Stomach (tissue), 19 donors: ENCODE measurements at regions of chr17 and their contacts with region 1.

Region 1: GRCh38 chr17:59004338-59005111 is 102.2 kb downstream of the TRIM37 start:
- DNase-seq: peak; percentile 67 to 86
- H3K4me3 ChIP-seq: no peak overlapping the region
- H3K27ac ChIP-seq: no peak overlapping the region
- H3K4me1 ChIP-seq: peaks cover 0 to 20% (median 1%) of the 10 kb centered on the region in 4 donors
- H3K27me3 ChIP-seq: no peaks in the 10 kb centered on the region
- CTCF ChIP-seq: peak in 6 of 7 experiments; percentile 56 to 99 (median 93)
- EP300 ChIP-seq: no peak
- POLR2A ChIP-seq: no peak

Region 2: DNA sequence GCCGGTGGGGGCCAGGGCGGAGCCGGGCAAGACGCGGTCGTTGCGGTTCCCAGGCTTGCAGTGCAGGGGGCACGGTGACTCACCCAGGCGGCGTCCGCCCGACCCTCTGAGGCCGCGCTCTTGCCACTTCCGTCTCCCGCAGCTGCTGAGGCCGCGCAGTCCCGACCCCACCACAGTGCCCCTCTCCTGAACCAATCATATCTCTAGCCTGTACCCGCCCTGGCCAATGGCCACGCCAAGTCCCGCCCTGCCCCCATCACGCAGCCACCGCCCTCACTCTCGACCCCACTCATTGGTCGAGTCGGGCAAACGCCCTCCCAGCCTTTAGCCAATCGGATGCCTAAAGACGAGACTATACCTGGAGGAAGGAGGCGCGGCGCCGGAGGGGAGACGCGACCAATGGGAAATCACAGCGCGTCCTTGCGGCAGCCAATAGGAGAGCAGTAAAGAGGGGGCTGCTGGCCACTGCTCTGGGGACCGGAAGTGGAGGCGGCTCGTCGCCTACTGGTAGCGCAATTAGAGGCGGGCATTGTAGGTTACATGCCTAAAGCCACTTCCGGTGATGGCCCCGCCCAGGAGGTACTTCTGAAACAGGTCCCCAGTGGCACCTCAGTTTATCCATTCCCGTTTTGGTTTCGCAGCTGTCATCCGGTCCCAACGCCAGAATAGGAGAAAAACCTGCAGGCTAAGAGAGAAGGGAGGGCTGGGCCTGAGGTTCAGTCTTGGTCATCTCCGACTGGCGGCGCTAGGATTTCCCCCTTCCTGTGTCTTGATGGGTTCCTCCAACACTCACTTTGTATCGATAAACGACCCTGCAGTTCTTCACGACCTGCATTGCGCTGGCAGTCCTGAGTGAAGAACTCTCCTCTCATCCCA is 486.6 kb before region 1 on chr17:
- intact Hi-C with region 1: loop called (anchors 10 kb)
- DNase-seq: peak; percentile 99 to 100
- H3K4me3 ChIP-seq: peak overlapping the region; percentile 63 to 76 (median 68)
- H3K27ac ChIP-seq: peak overlapping the region; percentile 93 to 98 (median 95)
- H3K4me1 ChIP-seq: peaks cover 35 to 61% (median 51%) of the 10 kb centered on the region in 4 donors
- H3K27me3 ChIP-seq: no peaks in the 10 kb centered on the region
- CTCF ChIP-seq: no peak
- EP300 ChIP-seq: no peak
- POLR2A ChIP-seq: peak in 1 of 4 donors; percentile 25

Region 3: DNA sequence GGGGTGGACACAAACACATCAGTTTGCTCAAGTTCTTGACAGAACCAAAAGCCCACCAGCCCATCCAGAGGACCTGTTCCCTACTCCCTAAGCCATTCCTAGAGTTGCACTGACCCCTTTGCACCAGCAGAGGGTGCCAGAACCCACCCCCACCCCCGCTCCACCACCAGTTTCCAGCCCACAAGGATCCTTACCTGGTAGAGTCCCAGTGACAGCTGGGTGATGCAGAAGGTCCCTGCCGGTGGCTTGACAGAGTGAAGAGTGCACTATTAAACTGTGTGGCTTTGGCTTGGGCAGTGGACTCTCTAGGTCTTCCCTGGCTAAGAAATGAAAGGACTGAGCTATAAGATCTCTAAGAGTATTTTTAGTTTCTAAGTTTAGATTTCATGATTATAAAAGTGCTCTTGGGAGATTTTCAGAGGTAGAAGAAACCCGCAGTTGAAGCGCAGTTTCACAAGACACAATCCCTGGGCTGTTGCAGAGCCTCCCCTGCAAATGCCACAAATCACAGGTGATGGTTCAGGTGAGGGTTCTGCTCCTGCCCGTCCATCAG is 416.7 kb before region 1 on chr17:
- intact Hi-C with region 1: loop called (anchors 10 kb)
- DNase-seq: peak; percentile 62 to 82
- H3K4me3 ChIP-seq: no peak overlapping the region
- H3K27ac ChIP-seq: no peak overlapping the region
- H3K4me1 ChIP-seq: no peaks in the 10 kb centered on the region
- H3K27me3 ChIP-seq: no peaks in the 10 kb centered on the region
- CTCF ChIP-seq: peak in 5 of 7 experiments; percentile 65 to 95 (median 84)
- EP300 ChIP-seq: no peak
- POLR2A ChIP-seq: no peak

Region 4: DNA sequence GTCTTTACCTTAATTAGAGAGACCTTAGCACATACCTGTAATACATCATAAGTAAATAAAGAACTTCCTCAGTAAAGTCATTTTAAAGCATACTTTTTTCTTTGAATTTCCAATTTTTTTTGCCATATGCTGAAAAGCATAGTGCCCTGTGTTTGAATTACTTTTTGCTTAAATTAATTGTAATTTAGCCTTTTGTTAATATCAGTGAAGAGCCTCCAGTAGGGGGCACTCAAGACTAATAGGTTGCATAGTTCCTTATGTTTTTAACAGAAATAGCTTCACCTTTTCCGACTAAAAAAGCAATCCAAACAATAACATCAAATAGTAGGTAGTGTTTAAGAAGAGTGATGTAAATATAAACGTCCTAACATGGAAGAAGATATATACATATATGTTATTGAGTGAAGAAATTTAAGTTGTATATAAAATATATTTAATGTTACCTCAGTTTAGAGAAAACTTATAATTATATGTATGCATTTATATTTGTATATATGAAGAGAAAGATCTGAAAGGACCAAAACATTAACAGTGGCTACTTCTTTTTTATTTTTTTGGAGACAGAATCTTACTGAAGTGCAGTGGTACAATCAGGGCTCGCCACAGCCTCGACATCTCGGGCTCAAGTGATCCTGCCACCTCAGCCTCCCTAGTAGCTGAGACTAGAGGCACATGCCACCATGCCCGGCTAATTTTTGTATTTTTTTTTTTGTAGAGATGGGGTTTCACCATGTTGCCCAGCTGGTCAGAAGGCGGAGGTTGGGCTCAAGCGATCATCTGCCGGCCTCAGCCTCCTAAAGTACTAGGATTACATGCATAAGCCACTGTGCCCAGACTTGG is 293.4 kb before region 1 on chr17:
- intact Hi-C with region 1: loop called (anchors 5 kb)
- DNase-seq: peak; percentile 36 to 74
- H3K4me3 ChIP-seq: no peak overlapping the region
- H3K27ac ChIP-seq: no peak overlapping the region
- H3K4me1 ChIP-seq: no peaks in the 10 kb centered on the region
- H3K27me3 ChIP-seq: no peaks in the 10 kb centered on the region
- CTCF ChIP-seq: peak in 5 of 7 experiments; percentile 47 to 70 (median 60)
- EP300 ChIP-seq: no peak
- POLR2A ChIP-seq: no peak

Region 5: GRCh38 chr17:59105852-59106462 is 101.4 kb after region 1 on chr17:
- intact Hi-C with region 1: no loop called
- DNase-seq: peak; percentile 63 to 74
- H3K4me3 ChIP-seq: peak overlapping the region; percentile 76 to 97 (median 91)
- H3K27ac ChIP-seq: peak overlapping the region; percentile 92 to 95 (median 94)
- H3K4me1 ChIP-seq: peaks cover 12 to 47% (median 27%) of the 10 kb centered on the region in 4 donors
- H3K27me3 ChIP-seq: no peaks in the 10 kb centered on the region
- CTCF ChIP-seq: no peak
- EP300 ChIP-seq: no peak
- POLR2A ChIP-seq: no peak